PC-3 (cell line): ENCODE measurements at regions of chr16 and their contacts with region 1.

Region 1: GRCh38 chr16:30698139-30698815 is 694 bp upstream of the SRCAP start:
- DNase-seq: peak; percentile 94
- ATAC-seq: peak; percentile 68
- H3K4me3 ChIP-seq: peak overlapping the region; percentile 82
- H3K27ac ChIP-seq: peak overlapping the region; percentile 99
- H3K4me1 ChIP-seq: peaks cover 18% of the 10 kb centered on the region
- H3K27me3 ChIP-seq: no peaks in the 10 kb centered on the region
- CTCF ChIP-seq: no peak

Region 2: DNA sequence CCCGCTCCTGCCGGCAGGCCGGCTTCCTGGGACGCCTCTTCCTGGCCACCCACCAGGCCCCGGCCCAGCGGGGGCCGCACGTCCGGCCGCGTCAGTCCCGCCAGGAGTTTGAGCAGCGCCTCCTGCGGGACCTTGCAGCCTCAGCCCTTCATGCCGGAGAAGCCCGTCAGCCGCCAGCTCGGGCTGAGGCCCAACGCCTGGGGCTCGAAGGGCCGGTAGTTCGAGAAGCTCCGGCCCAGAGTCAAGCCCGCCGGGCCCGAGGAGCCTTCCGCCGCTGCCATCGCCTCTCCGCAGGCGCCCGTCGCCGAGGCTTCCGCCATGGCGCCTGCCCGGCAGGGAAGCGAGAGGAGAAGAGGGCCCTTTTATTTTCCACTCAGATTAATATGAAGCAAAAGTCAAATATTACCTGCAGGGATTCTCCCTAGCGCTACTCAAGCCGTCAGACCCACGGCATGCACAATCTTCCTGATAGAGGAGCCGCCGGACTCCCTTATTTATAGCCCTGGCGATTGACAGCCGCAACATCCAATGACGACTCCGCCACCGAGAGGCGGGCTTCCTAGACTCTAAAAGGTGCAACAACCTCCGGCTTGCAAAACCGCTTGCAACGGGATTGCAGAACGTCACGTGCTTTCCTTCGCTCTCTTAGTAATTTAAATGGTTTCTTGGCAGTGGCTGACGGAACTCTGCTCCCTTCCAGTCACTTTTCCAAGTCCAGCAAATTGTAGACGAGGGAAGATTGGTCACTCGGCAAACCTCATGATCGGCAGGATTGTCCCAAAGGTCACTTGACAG is 252.7 kb before region 1 on chr16 and contains the start of gene SEPHS2:
- CTCF ChIA-PET with region 1: no interaction called
- POLR2A ChIA-PET with region 1: no interaction called
- intact Hi-C with region 1: no loop called
- DNase-seq: peak; percentile 95
- ATAC-seq: peak; percentile 92
- H3K4me3 ChIP-seq: peak within 1 kb of the TSS; percentile 96
- H3K27ac ChIP-seq: peak within 1 kb of the TSS; percentile 50
- H3K4me1 ChIP-seq: peaks cover 19% of the 10 kb centered on the region
- H3K27me3 ChIP-seq: no peaks in the 10 kb centered on the region
- CTCF ChIP-seq: peak; percentile 52
- total RNA-seq, gene SEPHS2: 8.4 and 16.8 TPM in 2 replicates

Region 3: DNA sequence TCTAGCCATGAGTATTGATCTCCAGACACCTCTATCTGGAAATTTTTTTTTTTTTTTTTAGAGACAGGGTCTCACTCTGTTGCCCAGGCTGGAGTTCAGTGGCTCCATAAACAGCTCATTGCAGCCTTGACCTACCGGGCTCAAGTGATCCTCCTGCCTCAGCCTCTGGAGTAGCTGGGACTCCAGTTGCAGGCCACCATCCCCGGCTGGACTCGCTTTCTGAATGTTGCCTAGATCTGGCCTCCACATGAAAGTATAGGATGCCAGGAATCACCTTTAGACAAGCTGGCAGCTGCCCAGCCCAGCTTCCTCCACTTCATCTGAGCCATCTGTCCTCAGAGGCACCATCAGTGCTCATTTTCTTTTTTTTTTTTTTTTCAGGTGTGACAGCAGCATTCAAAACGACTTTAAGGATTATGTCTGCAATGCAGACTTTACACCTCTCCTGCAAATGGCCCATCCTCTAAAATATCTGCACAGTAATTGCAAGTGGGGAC is 53.9 kb before region 1 on chr16:
- CTCF ChIA-PET with region 1: no interaction called
- POLR2A ChIA-PET with region 1: no interaction called
- intact Hi-C with region 1: no loop called
- DNase-seq: no peak
- ATAC-seq: no peak
- H3K4me3 ChIP-seq: no peak overlapping the region
- H3K27ac ChIP-seq: no peak overlapping the region
- H3K4me1 ChIP-seq: no peaks in the 10 kb centered on the region
- H3K27me3 ChIP-seq: no peaks in the 10 kb centered on the region
- CTCF ChIP-seq: no peak

Region 4: DNA sequence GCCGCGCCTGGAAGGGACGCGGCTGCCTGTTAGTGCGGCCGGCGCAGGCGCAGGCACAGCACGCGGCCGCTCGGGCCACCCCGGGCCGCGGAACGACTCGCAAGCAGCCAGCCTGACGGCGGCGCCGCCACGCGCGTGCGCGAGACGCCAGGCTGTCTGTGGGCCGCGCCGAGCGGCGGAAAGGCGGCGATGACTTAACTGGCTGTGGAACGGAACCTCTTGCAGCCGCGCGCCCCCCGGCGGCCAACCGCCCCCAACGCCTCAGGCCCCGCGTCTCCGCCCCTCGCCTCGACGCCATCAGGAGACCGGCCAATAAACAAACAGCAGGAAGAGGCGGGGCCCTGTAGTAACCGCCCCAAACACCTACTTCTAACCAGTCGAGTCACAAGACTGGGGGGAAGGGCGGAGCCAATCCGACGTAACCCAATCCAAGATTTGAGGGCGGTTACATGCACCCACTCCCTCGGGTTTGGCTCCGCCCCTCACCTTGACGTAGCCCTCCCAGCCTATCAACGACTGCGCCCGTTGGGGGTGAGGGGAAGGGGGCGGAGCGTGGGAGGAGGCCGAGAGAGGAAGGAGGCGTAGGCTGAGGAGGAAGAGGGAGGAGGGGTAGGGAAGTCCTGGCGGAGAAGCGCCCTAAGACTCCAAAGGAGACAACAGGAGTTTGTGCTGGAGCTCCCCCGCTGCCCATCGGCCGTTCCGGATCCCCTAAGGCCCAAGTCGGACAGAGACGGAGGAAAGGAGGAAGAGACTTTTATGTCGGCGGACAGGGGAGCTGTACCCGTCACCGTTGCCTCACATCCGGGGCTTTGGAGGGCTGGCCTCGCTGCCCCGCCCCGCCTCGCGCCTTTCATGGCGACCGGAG is 40.2 kb before region 1 on chr16 and contains the start of gene FBRS:
- CTCF ChIA-PET with region 1: no interaction called
- POLR2A ChIA-PET with region 1: no interaction called
- intact Hi-C with region 1: loop called (anchors 1 kb)
- DNase-seq: peak; percentile 99
- ATAC-seq: peak; percentile 72
- H3K4me3 ChIP-seq: peak within 1 kb of the TSS; percentile 94
- H3K27ac ChIP-seq: peak within 1 kb of the TSS; percentile 96
- H3K4me1 ChIP-seq: peaks cover 23% of the 10 kb centered on the region
- H3K27me3 ChIP-seq: no peaks in the 10 kb centered on the region
- CTCF ChIP-seq: peak; percentile 62
- total RNA-seq, gene FBRS: 22.2 and 35.0 TPM in 2 replicates

Region 5: GRCh38 chr16:30669896-30670797 is 28.1 kb before region 1 on chr16:
- CTCF ChIA-PET with region 1: no interaction called
- POLR2A ChIA-PET with region 1: no interaction called
- intact Hi-C with region 1: no loop called
- DNase-seq: no peak
- ATAC-seq: no peak
- H3K4me3 ChIP-seq: no peak overlapping the region
- H3K27ac ChIP-seq: no peak overlapping the region
- H3K4me1 ChIP-seq: no peaks in the 10 kb centered on the region
- H3K27me3 ChIP-seq: no peaks in the 10 kb centered on the region
- CTCF ChIP-seq: no peak

Region 6: DNA sequence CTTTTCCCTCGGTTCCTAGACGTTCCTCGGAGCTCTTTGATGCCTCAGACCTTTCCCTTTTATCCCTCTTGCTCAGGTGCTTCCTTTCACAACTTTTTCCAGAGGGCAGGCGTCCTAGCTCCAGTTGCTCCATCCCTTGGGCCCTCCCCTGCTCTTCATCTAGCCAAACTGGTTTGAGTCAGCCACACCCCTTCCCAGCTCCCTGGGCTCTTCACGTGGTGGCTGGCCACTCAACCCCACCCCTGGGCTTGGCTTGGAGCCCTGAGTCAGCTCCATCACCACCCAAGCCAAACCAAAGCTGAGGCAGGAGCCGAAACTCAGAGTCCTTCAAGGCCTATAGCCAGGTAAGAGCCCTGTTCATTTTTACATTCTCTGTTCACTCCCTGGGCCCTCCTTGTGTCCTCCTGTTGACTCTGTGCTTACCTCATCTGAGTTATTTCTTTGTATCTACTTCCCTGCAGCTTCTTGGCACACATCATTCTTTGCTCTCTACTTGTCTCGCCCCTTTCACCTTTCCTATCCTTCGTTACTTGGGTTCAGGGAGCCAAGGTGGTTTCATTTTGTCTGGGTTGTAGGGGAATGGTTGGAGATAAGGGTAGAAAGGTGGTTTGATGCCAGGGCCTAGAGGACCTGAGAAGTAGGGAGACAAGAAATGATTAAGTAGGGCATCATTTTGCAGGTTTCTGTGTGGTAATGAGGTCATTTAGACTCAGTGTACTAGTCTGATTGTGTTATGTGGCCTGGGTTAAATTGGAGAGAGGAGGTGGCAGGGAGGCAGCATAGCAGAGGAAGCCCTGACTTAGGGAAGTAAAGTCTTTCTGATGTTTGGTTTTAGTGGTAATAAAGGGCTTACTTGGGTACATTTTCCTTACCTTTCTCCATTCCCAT is 42.3 kb after region 1 on chr16:
- CTCF ChIA-PET with region 1: no interaction called
- POLR2A ChIA-PET with region 1: no interaction called
- intact Hi-C with region 1: loop called (anchors 1 kb)
- DNase-seq: peak; percentile 95
- ATAC-seq: peak; percentile 79
- H3K4me3 ChIP-seq: peak overlapping the region; percentile 68
- H3K27ac ChIP-seq: peak overlapping the region; percentile 99
- H3K4me1 ChIP-seq: peaks cover 36% of the 10 kb centered on the region
- H3K27me3 ChIP-seq: no peaks in the 10 kb centered on the region
- CTCF ChIP-seq: no peak

Region 7: GRCh38 chr16:30902029-30902972 is 204.0 kb after region 1 on chr16:
- CTCF ChIA-PET with region 1: interaction called, 11 read pairs
- POLR2A ChIA-PET with region 1: no interaction called
- intact Hi-C with region 1: no loop called
- DNase-seq: peak; percentile 62
- ATAC-seq: peak; percentile 96
- H3K4me3 ChIP-seq: peak overlapping the region; percentile 69
- H3K27ac ChIP-seq: no peak overlapping the region
- H3K4me1 ChIP-seq: peaks cover 2% of the 10 kb centered on the region; the same call in 1 of the 2 replicates
- H3K27me3 ChIP-seq: no peaks in the 10 kb centered on the region
- CTCF ChIP-seq: no peak